Endothelial cell of umbilical vein (primary cell): ENCODE measurements at regions of chr6 and their contacts with region 1.

Region 1: DNA sequence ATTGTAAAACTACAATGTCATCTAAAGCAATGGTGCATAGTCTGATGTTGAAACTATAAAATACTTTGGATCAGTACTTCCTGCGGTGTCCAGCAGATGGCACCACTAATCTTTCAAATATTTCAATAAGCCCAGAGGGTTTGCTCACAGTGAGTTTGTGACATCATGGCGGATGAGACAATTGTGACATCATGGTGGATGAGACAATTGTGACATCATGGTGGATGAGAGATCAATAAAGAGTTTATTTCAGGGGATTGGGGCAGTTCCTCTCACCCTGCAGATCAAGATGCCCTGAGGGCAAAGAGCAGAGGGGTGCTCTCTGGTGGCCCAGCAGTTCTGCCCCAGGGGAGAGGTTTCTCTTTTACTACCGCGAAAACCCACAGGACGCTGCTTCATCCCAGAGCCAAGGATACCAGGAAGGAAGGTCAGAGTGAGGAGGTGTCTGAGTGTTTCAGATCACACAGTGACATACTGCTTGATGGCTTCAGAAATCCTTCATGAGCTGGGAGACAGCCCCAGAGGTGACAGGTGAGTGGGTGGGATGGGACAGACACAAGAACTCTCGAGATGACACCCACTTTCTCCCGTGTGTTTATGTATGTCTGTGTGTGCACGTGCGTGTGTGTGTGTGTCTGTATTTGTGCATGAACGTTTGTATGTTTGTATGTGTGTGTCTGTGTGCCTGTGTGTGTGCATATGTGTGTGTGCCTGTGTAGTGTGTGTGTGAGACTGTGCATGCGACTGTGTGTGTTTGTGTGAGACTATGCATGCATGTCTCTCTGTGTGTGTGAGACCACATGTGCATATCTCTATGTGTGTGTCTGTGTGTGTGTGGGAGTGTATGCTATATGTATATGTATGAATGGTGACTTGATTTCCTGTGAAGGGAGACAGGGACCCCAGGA is 7.3 kb upstream of the ULBP2 start:
- DNase-seq: peak; percentile 74
- H3K4me3 ChIP-seq: no peak overlapping the region
- H3K27ac ChIP-seq: no peak overlapping the region
- H3K4me1 ChIP-seq: peaks cover 10% of the 10 kb centered on the region
- H3K27me3 ChIP-seq: peaks cover 63 to 75% of the 10 kb centered on the region in 2 experiments
- CTCF ChIP-seq: peak; percentile 54 to 64
- POLR2A ChIP-seq: no peak

Region 2: GRCh38 chr6:148599967-148600426 is 1334.5 kb before region 1 on chr6:
- CTCF ChIA-PET with region 1: no interaction called
- POLR2A ChIA-PET with region 1: no interaction called
- dilution Hi-C with region 1: no loop called
- intact Hi-C with region 1: no loop called
- DNase-seq: no peak
- H3K4me3 ChIP-seq: no peak overlapping the region
- H3K27ac ChIP-seq: no peak overlapping the region
- H3K4me1 ChIP-seq: no peaks in the 10 kb centered on the region
- H3K27me3 ChIP-seq: no peaks in the 10 kb centered on the region
- CTCF ChIP-seq: no peak
- POLR2A ChIP-seq: no peak

Region 3: DNA sequence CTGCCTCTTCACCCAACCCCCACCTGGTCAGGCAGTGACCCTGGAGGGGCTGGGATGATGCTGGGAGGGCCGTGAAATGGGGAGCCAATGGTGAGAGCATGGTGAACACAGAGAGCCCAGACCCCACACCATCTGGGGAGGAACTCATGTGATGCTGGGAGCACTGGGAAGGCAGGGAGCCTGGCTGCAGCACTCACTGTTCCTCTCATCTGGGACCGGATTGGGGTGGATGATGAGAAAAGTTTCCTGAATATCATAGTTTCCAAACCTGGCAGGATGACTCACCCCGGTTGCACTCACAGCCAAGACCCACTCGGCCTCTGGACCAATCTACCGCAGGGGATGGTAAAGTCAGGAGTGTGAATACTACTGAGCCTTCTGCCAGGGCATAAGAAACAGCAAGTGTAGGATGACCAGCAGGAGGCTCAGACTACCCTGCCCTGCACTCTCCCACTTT is 51.0 kb after region 1 on chr6:
- CTCF ChIA-PET with region 1: no interaction called
- POLR2A ChIA-PET with region 1: no interaction called
- dilution Hi-C with region 1: no loop called
- intact Hi-C with region 1: no loop called
- DNase-seq: no peak
- H3K4me3 ChIP-seq: no peak overlapping the region
- H3K27ac ChIP-seq: no peak overlapping the region
- H3K4me1 ChIP-seq: peaks cover 1% of the 10 kb centered on the region
- H3K27me3 ChIP-seq: peaks cover 75 to 87% of the 10 kb centered on the region in 2 experiments
- CTCF ChIP-seq: peak in 1 of 2 donors; percentile 9
- POLR2A ChIP-seq: no peak

Region 4: DNA sequence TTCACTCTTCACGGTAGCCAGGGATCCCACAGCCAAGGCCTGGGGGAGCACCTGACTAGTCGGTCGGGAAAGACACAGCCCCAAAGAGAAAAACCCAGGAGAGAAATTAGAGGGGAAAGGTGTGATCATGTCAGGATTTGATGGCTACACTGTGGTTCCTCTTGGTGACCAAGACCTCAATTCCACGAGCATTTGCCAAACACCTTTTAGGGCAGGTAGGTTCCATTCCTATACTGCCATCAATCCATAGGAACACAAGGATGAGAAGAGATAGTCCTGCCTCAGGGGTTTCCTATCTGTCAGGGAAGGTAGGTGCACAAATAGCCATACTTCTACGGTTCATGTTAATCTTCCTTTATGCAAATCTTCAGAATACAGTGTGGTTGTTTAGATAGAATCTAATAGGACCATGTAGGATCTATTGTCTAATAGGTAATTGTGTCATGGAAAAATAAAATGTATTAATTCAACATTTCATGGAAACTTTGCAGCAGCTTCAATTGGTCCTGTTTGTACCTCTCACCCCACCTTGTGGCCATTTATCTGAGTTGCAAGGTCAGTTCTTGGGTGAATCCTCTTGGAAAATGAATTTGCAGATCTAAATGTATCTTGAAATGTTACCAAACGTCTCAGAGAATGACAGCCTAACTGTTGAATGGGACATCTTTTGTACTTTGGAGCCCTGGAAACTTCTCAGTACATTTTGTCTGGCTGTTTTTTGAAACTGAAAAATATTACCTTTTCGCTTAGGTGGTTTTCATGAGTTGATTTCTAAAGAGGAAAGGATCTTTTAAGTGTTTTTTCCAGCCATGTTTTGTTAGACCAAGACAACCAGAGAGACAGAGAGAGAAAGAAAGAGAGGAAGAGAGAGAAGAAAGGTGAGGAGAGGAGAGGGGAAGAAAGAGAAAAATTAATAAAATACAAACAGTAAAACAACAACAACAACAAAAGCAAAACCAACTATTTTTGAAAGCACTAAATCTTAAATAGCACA is 400.6 kb after region 1 on chr6:
- CTCF ChIA-PET with region 1: interaction called, 3 read pairs
- POLR2A ChIA-PET with region 1: no interaction called
- dilution Hi-C with region 1: no loop called
- intact Hi-C with region 1: loop called (anchors 2 kb)
- DNase-seq: peak; percentile 65
- H3K4me3 ChIP-seq: no peak overlapping the region
- H3K27ac ChIP-seq: no peak overlapping the region
- H3K4me1 ChIP-seq: no peaks in the 10 kb centered on the region
- H3K27me3 ChIP-seq: peaks cover 3 to 12% of the 10 kb centered on the region in 2 experiments
- CTCF ChIP-seq: peak; percentile 61 to 62
- POLR2A ChIP-seq: no peak